CD8-positive, alpha-beta T cell (primary cell): ENCODE measurements at regions of chr7 and their contacts with region 1.

Region 1: GRCh38 chr7:32846701-32847100 is 44.9 kb downstream of the KBTBD2 start:
- DNase-seq: peak; percentile 80 to 96 (median 91)
- ATAC-seq: peak; percentile 100
- H3K4me3 ChIP-seq: no peak overlapping the region
- H3K4me3 Mint-ChIP-seq: no peak overlapping the region
- H3K27ac ChIP-seq: no peak overlapping the region
- H3K27ac Mint-ChIP-seq: no peak overlapping the region
- H3K4me1 ChIP-seq: peaks cover 4% of the 10 kb centered on the region
- H3K4me1 Mint-ChIP-seq: peaks cover 8% of the 10 kb centered on the region
- H3K27me3 ChIP-seq: no peaks in the 10 kb centered on the region
- H3K27me3 Mint-ChIP-seq: peaks cover 26% of the 10 kb centered on the region
- CTCF ChIP-seq: peak; percentile 80

Region 2: GRCh38 chr7:31271621-31272405 is 1574.9 kb before region 1 on chr7:
- CTCF ChIA-PET with region 1: no interaction called
- POLR2A ChIA-PET with region 1: no interaction called
- intact Hi-C with region 1: no loop called
- DNase-seq: no peak
- ATAC-seq: no peak
- H3K4me3 ChIP-seq: no peak overlapping the region
- H3K4me3 Mint-ChIP-seq: no peak overlapping the region
- H3K27ac ChIP-seq: no peak overlapping the region
- H3K27ac Mint-ChIP-seq: no peak overlapping the region
- H3K4me1 ChIP-seq: no peaks in the 10 kb centered on the region
- H3K4me1 Mint-ChIP-seq: no peaks in the 10 kb centered on the region
- H3K27me3 ChIP-seq: no peaks in the 10 kb centered on the region
- H3K27me3 Mint-ChIP-seq: no peaks in the 10 kb centered on the region
- CTCF ChIP-seq: no peak

Region 3: DNA sequence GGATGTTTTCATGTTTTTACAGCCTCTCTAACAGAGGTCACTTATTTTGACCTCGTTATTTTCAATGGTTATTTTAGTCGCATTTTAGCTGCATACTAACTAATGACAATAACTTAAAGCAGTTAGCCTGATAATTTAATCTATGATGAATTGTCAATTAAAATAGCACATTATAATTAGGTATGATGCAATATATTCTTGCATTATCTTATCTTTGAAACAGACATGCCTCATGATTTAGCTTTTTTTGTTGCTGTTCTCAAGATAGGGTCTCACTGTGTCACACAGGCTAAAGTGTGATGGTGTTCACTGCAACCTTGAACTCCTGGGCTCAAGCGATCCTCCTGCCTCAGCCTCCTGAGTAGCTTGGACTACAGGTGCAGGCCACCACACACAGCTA is 81.5 kb before region 1 on chr7:
- CTCF ChIA-PET with region 1: no interaction called
- POLR2A ChIA-PET with region 1: no interaction called
- intact Hi-C with region 1: loop called in 1 of 2 experiments (anchors 5 kb)
- DNase-seq: no peak
- ATAC-seq: no peak
- H3K4me3 ChIP-seq: no peak overlapping the region
- H3K4me3 Mint-ChIP-seq: no peak overlapping the region
- H3K27ac ChIP-seq: no peak overlapping the region
- H3K27ac Mint-ChIP-seq: no peak overlapping the region
- H3K4me1 ChIP-seq: peaks cover 4% of the 10 kb centered on the region
- H3K4me1 Mint-ChIP-seq: peaks cover 12% of the 10 kb centered on the region
- H3K27me3 ChIP-seq: peaks cover 0 to 7% of the 10 kb centered on the region in 2 experiments
- H3K27me3 Mint-ChIP-seq: peaks cover 39% of the 10 kb centered on the region
- CTCF ChIP-seq: no peak

Region 4: DNA sequence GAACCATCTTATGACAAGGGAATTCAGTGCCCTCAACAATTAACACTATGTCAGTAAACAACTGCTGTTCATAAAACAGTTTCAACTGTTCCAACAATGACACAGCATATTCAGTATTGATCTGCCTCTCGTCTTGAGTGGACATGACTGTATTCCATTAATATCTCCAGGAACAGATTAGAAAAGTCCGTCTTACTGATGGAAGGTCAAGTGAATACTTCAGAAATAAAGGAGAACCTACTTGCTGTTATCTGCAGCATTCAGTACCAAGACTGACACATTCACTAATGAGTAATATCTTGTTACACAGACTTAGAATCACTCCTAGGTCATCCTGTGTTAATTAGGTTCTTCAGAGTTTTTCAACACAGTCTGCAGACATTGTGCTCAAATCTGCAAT is 32.8 kb after region 1 on chr7:
- CTCF ChIA-PET with region 1: interaction called, 16 read pairs
- POLR2A ChIA-PET with region 1: no interaction called
- intact Hi-C with region 1: no loop called
- DNase-seq: no peak
- ATAC-seq: no peak
- H3K4me3 ChIP-seq: no peak overlapping the region
- H3K4me3 Mint-ChIP-seq: no peak overlapping the region
- H3K27ac ChIP-seq: no peak overlapping the region
- H3K27ac Mint-ChIP-seq: no peak overlapping the region
- H3K4me1 ChIP-seq: peaks cover 42% of the 10 kb centered on the region
- H3K4me1 Mint-ChIP-seq: peaks cover 66% of the 10 kb centered on the region
- H3K27me3 ChIP-seq: no peaks in the 10 kb centered on the region
- H3K27me3 Mint-ChIP-seq: no peaks in the 10 kb centered on the region
- CTCF ChIP-seq: no peak

Region 5: GRCh38 chr7:32905175-32905662 is 58.5 kb after region 1 on chr7:
- CTCF ChIA-PET with region 1: interaction called, 22 read pairs
- POLR2A ChIA-PET with region 1: no interaction called
- intact Hi-C with region 1: no loop called
- DNase-seq: peak; percentile 37 to 92 (median 66)
- ATAC-seq: peak; percentile 83
- H3K4me3 ChIP-seq: peak overlapping the region; percentile 28 to 42
- H3K4me3 Mint-ChIP-seq: peak overlapping the region; percentile 81
- H3K27ac ChIP-seq: peak overlapping the region; percentile 72 to 73
- H3K27ac Mint-ChIP-seq: peak overlapping the region; percentile 91
- H3K4me1 ChIP-seq: peaks cover 13% of the 10 kb centered on the region
- H3K4me1 Mint-ChIP-seq: peaks cover 13% of the 10 kb centered on the region
- H3K27me3 ChIP-seq: no peaks in the 10 kb centered on the region
- H3K27me3 Mint-ChIP-seq: no peaks in the 10 kb centered on the region
- CTCF ChIP-seq: no peak

Region 6: DNA sequence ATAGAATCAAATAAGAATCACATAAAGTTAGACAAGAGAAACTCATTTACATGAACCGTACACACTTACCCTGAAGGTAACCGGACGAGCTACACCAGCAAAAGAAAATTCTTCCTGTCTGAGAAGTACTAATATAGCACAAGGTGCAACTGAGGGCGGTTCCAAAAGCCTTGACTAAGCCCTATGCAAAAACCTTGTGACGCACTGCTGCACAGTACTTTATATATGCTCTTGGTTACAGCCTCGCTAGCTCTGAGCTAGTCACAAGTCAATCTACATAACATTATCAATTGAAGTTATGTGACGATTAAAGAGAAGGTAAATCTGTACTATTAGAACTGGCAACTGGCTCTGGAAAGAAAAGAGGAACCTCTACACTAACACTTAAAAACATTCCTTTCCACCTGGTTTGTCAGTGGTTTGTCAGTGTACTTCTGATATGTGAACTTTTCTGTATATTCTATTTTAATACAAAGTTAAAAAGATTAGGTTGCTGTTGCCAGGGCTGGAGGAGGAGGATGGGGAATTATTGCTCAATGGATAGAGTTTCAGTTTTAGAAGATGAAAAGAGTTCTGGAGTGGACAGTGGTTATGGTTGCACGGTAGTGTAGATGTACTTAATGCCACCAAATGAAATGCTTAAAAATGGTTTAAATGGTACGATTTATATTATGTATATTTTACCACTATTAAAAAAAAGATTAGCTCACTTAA is 194.3 kb after region 1 on chr7:
- CTCF ChIA-PET with region 1: interaction called, 5 read pairs
- POLR2A ChIA-PET with region 1: no interaction called
- intact Hi-C with region 1: loop called in 1 of 2 experiments (anchors 5 kb)
- DNase-seq: peak; percentile 36 to 87 (median 63)
- ATAC-seq: peak; percentile 99
- H3K4me3 ChIP-seq: peak overlapping the region; percentile 3 to 23
- H3K4me3 Mint-ChIP-seq: peak overlapping the region; percentile 77
- H3K27ac ChIP-seq: peak overlapping the region; percentile 54 to 75
- H3K27ac Mint-ChIP-seq: peak overlapping the region; percentile 90
- H3K4me1 ChIP-seq: peaks cover 25% of the 10 kb centered on the region
- H3K4me1 Mint-ChIP-seq: peaks cover 61% of the 10 kb centered on the region
- H3K27me3 ChIP-seq: no peaks in the 10 kb centered on the region
- H3K27me3 Mint-ChIP-seq: no peaks in the 10 kb centered on the region
- CTCF ChIP-seq: no peak

Region 7: GRCh38 chr7:33062782-33063443 is 216.2 kb after region 1 on chr7:
- CTCF ChIA-PET with region 1: interaction called, 10 read pairs
- POLR2A ChIA-PET with region 1: no interaction called
- intact Hi-C with region 1: no loop called
- DNase-seq: peak; percentile 88 to 97 (median 91)
- ATAC-seq: peak; percentile 92
- H3K4me3 ChIP-seq: peak overlapping the region; percentile 75 to 97
- H3K4me3 Mint-ChIP-seq: peak overlapping the region; percentile 91
- H3K27ac ChIP-seq: peak overlapping the region; percentile 79 to 82
- H3K27ac Mint-ChIP-seq: peak overlapping the region; percentile 94
- H3K4me1 ChIP-seq: peaks cover 32% of the 10 kb centered on the region
- H3K4me1 Mint-ChIP-seq: peaks cover 42% of the 10 kb centered on the region
- H3K27me3 ChIP-seq: no peaks in the 10 kb centered on the region
- H3K27me3 Mint-ChIP-seq: no peaks in the 10 kb centered on the region
- CTCF ChIP-seq: no peak